Heart left ventricle (tissue), 16 donors: ENCODE measurements at regions of chr3 and their contacts with region 1.

Region 1: DNA sequence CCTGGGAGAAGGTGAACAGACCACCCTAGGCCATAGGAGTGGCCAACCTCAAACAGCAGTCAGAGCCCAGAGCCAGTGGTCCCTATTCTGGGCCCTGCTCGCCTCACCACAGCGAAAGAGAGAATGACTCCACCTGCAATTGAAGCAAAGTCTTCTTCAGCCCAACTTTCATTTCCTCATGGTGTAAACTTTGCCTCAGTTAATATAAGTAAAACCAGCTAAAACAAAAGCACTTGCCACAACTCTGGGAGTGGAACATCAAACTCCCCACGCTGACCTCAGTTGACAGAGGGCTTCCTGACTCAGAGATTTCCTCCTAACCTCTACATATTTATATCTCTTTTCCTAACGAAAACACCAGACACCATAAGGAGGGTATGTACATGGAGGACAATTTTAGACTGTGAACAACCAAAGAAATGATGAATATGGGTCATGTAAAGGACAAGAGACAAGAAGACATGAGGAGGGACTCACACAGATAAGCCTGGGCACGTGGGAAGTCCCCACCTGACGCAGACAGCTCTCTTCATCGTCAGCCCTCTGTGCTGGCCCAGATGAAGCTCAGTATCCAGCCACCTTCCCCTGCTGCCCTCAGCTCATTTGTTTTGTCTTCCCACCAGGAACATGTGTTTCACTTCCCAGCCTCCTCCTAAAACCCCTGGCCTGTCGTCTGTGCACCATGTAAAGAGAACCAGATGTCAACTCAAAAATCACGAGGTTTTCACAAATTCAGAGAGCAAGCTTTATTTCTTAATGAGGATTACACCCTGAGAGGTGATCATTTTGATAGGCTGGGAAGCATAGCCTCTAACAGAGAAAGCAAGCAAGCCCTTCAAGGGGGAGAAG is 140.9 kb downstream of the KCNMB2 start:
- DNase-seq: no peak
- ATAC-seq: peak in 1 of 4 donors; percentile 11
- H3K4me3 ChIP-seq: no peak overlapping the region
- H3K27ac ChIP-seq: no peak overlapping the region
- H3K4me1 ChIP-seq: peaks cover 0 to 34% (median 3%) of the 10 kb centered on the region in 12 donors
- H3K27me3 ChIP-seq: no peaks in the 10 kb centered on the region
- CTCF ChIP-seq: no peak
- POLR2A ChIP-seq: no peak

Region 2: GRCh38 chr3:178705925-178706324 is 28.8 kb after region 1 on chr3:
- intact Hi-C with region 1: loop called in 1 of 10 experiments (anchors 2 kb)
- DNase-seq: no peak
- ATAC-seq: no peak
- H3K4me3 ChIP-seq: no peak overlapping the region
- H3K27ac ChIP-seq: no peak overlapping the region
- H3K4me1 ChIP-seq: peaks cover 0 to 11% (median 0%) of the 10 kb centered on the region in 12 donors
- H3K27me3 ChIP-seq: no peaks in the 10 kb centered on the region
- CTCF ChIP-seq: no peak
- POLR2A ChIP-seq: no peak

Region 3: DNA sequence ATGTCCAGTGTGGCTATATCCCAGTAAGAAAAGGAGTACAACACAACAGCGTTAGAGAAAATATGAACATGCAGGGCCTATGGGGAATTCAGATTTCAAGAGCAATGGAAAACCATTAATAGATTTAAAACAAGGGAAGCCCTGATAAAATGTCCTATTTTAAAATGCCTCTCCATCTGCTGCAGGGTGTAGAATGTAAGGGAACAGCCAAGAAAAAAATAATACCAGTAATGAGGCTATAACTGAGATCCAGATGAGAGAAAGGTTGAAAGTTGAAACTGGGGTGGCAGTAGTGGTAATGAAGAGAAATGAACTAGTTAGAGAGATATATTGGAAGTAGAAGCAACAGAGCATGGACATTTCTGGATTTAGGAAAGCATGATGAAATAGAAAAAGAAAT is 85.2 kb after region 1 on chr3:
- intact Hi-C with region 1: no loop called
- DNase-seq: no peak
- ATAC-seq: peak in 1 of 4 donors; percentile 52
- H3K4me3 ChIP-seq: no peak overlapping the region
- H3K27ac ChIP-seq: peak overlapping the region in 2 of 12 donors; percentile 10 to 14
- H3K4me1 ChIP-seq: peaks cover 0 to 10% (median 0%) of the 10 kb centered on the region in 12 donors
- H3K27me3 ChIP-seq: no peaks in the 10 kb centered on the region
- CTCF ChIP-seq: no peak
- POLR2A ChIP-seq: no peak